Posterior vena cava (tissue), 2 donors: ENCODE measurements at regions of chr12 and their contacts with region 1.

Region 1: DNA sequence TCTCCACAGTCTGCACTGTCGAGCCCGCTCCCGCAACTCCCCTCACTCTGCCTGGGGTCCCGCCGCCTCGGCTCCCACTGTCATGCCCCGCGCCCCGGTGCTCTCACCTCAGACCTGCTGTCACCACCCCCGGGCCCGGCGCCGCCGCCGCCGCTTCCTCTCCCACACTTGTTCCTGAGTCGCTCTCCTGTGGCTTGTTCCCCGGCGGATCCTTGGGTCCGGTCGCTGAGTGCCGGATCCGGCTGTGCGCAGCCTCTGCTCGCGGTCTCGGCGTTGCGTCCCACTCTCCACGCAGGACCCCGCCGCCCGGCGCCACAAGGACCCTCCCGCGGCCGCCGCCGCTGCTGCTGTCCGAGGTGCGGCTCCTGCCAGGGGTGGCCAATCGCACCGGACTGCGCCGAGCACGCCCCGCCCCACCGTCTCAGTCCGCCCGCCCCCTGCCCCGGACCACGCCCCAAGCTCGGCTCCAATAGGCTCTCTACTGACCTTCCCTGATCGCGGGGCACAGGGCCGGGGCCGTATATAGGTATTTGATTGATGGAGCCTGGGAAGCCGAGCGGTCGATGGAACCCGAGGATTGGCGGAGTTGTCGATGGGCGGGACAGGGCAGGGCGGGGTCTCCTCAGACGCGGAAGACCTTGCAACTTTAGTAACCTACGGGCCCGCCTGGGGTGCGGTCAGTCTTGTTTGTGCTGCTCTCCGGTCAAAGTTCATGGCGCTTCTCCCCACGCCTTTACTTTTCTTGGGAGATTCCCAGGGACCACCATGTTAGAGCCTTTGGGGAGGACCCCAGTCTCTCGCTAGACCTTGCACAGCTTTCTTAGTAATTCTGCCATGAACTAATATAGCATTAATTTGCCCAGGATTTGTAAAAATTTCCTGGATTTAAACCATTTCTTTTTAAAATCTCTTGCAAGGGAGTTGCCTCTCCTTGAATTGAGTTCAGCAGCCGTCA is at the start of gene TAOK3:
- DNase-seq: peak; percentile 100
- total RNA-seq, gene TAOK3: 27.9 to 31.8 TPM

Region 2: DNA sequence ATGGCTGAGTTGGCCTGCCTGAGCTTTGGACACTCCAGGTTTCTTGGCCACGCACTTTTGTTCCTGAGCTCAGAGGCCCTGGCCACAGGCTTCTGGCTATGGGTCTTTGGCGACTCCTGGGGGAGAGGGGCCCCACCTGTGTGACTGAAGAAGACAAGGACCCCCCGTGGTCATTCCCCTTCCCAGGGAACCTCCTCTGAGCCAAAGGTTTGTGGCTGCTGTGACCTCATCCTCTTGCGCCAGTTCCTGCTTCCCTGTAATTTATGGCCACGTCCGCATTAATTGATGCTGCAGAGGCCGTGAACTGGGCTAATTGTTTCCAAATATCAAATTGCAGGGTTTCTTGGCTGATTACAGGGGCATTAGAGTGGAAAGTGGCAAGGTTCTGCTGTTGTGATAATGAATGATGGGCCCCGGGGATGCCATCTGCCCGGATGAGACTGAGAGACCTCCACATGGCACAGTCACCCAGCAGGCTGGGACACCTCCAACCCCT is 983.8 kb before region 1 on chr12:
- intact Hi-C with region 1: no loop called
- DNase-seq: no peak

Region 3: GRCh38 chr12:117968826-117969659 is 403.8 kb before region 1 on chr12 and contains the start of gene KSR2:
- intact Hi-C with region 1: no loop called
- DNase-seq: no peak
- total RNA-seq, gene KSR2: 0.05 TPM in 1 of 2 donors, not detected in the other

Region 4: GRCh38 chr12:118183705-118184104 is 189.1 kb before region 1 on chr12:
- intact Hi-C with region 1: loop called (anchors 5 to 10 kb)
- DNase-seq: no peak

Region 5: GRCh38 chr12:118189741-118190191 is 183.1 kb before region 1 on chr12:
- intact Hi-C with region 1: loop called (anchors 5 to 10 kb)
- DNase-seq: no peak

Region 6: GRCh38 chr12:118307069-118307954 is 65.5 kb before region 1 on chr12:
- intact Hi-C with region 1: loop called in 1 of 2 experiments (anchors 5 kb)
- DNase-seq: no peak